ENCODE measurements at regions of chr14 and their contacts with region 1.

Region 1: DNA sequence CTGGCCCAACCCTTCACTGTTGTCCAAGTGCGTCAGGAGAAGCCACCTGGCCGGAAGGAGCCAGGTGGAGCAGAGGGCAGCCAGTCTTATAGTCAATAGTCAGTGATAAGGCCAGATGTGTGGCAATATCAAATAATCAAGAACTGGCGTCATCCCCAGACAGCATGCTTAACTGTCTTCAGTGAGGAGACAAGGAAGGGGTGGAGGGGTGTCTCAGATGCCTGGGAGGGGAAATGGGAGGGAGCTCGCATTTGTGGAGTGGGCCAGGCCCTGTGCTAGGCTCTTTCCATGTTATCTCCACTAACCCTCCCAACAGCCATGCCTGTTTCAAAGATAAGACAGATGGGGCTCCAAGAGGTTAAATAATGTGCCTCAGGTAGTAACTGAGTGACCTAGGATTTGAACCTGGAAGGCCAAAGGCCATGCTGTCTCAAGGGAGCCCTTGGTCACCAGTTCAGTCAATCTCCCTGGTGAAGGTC is 48.9 kb upstream of the FOS start:
- DNase-seq: peak; percentile 32
- H3K4me3 ChIP-seq: no peak overlapping the region
- H3K27ac ChIP-seq: peak overlapping the region; percentile 71
- H3K4me1 ChIP-seq: peaks cover 26% of the 10 kb centered on the region
- H3K27me3 ChIP-seq: no peaks in the 10 kb centered on the region
- CTCF ChIP-seq: no peak

Region 2: GRCh38 chr14:75184039-75184835 is 45.5 kb before region 1 on chr14:
- CTCF ChIA-PET with region 1: no interaction called
- POLR2A ChIA-PET with region 1: no interaction called
- intact Hi-C with region 1: loop called (anchors 2 kb)
- DNase-seq: no peak
- H3K4me3 ChIP-seq: no peak overlapping the region
- H3K27ac ChIP-seq: no peak overlapping the region
- H3K4me1 ChIP-seq: no peaks in the 10 kb centered on the region
- H3K27me3 ChIP-seq: no peaks in the 10 kb centered on the region
- CTCF ChIP-seq: no peak

Measured in A673 (cell line).